OCI-LY7 (cell line): ENCODE measurements at regions of chr5 and their contacts with region 1.

Region 1: GRCh38 chr5:19322716-19323485 is 665.1 kb downstream of the CDH18 start:
- DNase-seq: no peak
- H3K4me3 ChIP-seq: no peak overlapping the region
- H3K27ac ChIP-seq: no peak overlapping the region
- H3K4me1 ChIP-seq: peaks cover 10% of the 10 kb centered on the region
- CTCF ChIP-seq: no peak

Region 2: GRCh38 chr5:19334278-19334677 is 11.4 kb after region 1 on chr5:
- CTCF ChIA-PET with region 1: no interaction called
- POLR2A ChIA-PET with region 1: interaction called, 25 read pairs
- intact Hi-C with region 1: no loop called
- DNase-seq: no peak
- H3K4me3 ChIP-seq: no peak overlapping the region
- H3K27ac ChIP-seq: no peak overlapping the region
- H3K4me1 ChIP-seq: peaks cover 4% of the 10 kb centered on the region
- CTCF ChIP-seq: no peak

Region 3: GRCh38 chr5:19488786-19489185 is 165.9 kb after region 1 on chr5:
- CTCF ChIA-PET with region 1: no interaction called
- POLR2A ChIA-PET with region 1: no interaction called
- intact Hi-C with region 1: no loop called
- DNase-seq: no peak
- H3K4me3 ChIP-seq: no peak overlapping the region
- H3K27ac ChIP-seq: no peak overlapping the region
- H3K4me1 ChIP-seq: no peaks in the 10 kb centered on the region
- CTCF ChIP-seq: no peak